ENCODE measurements at regions of chr12 and their contacts with region 1.

Region 1: GRCh38 chr12:105705765-105706164 is 375.3 kb downstream of the C12orf75 start:
- DNase-seq: no peak
- H3K4me3 ChIP-seq: no peak overlapping the region
- H3K27ac ChIP-seq: no peak overlapping the region
- H3K4me1 ChIP-seq: peaks cover 0 to 6% (median 0%) of the 10 kb centered on the region in 3 donors
- H3K27me3 ChIP-seq: no peaks in the 10 kb centered on the region
- CTCF ChIP-seq: peak in 5 of 6 experiments; percentile 48 to 75 (median 58)
- POLR2A ChIP-seq: no peak

Region 2: DNA sequence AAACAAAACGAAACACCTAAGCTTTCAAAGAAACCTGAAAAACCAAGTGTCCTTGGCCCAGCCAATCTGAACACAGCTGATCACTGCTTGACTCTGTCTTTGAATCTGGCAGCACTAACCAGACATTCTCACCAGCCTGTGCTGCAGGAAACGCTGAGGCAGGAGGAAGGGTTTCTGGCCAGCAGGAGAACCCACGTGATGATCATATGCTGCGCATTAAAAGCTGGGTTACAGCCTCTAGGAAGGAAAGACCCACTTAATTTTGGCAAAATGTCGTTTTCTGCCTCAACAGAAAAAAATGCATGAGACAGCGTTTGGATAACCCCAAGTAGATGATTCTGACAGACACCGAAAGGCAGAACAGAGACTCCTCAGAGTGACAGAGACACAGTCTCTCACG is 479.5 kb before region 1 on chr12:
- intact Hi-C with region 1: no loop called
- DNase-seq: no peak
- H3K4me3 ChIP-seq: no peak overlapping the region
- H3K27ac ChIP-seq: peak overlapping the region in 3 of 4 donors; percentile 47 to 63 (median 53)
- H3K4me1 ChIP-seq: peaks cover 4 to 97% (median 17%) of the 10 kb centered on the region in 3 donors
- H3K27me3 ChIP-seq: no peaks in the 10 kb centered on the region
- CTCF ChIP-seq: no peak
- POLR2A ChIP-seq: peak in 1 of 4 donors; percentile 13

Region 3: DNA sequence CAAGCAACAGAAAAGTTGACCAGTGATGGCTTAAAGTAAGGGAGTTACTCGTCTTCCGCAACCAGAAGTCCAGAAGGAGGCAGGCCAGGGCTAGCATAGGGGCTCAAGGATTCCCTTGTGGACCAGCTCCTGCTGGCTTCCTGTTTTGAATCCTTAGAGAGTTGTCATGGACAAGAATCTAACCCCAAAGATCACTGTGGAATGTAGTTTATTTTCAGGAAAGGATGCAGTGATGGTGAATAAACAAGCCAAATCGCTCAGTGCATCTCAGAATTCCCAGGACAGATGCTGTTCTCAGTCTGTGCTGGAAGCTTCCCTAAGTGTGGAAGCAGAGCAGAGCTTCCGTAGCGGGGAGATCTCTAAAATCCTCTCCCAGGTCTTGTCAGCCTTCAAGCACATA is 64.0 kb before region 1 on chr12:
- intact Hi-C with region 1: no loop called
- DNase-seq: no peak
- H3K4me3 ChIP-seq: no peak overlapping the region
- H3K27ac ChIP-seq: no peak overlapping the region
- H3K4me1 ChIP-seq: no peaks in the 10 kb centered on the region
- H3K27me3 ChIP-seq: no peaks in the 10 kb centered on the region
- CTCF ChIP-seq: no peak
- POLR2A ChIP-seq: no peak

Region 4: DNA sequence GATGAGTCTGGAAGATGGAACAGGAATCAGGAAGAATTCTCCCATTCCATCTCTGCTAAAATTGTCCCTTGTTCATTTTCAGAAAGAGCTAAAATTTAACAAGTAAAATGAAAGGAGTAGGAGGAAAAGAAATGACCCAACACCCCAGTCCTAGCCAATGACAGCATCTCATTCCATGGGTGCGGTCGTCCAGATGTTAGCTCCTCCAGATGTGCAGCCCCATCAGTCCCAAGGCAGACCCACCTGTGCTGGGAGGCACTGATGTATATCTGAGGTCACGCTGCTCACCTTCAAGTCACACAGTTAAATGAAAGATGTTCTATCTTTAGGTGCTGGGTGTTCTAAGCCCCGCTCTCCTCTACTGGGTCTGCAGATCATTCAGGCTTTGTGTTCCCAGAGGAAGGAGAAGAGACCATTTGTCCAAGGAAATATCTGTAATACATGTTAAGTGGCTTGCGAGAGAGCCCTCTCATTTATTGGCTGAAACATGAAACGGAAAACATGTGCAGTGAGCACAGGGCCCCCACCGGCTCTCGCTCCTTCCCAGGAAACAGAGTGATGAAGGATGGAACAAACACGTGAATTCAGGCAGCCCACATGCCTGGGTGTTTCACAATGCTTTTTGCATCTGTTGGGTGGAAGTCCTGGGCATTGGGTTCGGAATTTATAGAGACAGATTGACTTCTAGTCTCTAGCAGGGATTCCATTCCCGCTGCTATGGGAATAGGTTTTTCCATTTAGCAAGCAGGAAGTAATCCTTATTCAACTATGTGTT is 138.4 kb after region 1 on chr12:
- intact Hi-C with region 1: no loop called
- DNase-seq: no peak
- H3K4me3 ChIP-seq: no peak overlapping the region
- H3K27ac ChIP-seq: peak overlapping the region in 1 of 4 donors; percentile 16
- H3K4me1 ChIP-seq: peaks cover 0 to 5% (median 0%) of the 10 kb centered on the region in 3 donors
- H3K27me3 ChIP-seq: no peaks in the 10 kb centered on the region
- CTCF ChIP-seq: no peak
- POLR2A ChIP-seq: no peak

Region 5: DNA sequence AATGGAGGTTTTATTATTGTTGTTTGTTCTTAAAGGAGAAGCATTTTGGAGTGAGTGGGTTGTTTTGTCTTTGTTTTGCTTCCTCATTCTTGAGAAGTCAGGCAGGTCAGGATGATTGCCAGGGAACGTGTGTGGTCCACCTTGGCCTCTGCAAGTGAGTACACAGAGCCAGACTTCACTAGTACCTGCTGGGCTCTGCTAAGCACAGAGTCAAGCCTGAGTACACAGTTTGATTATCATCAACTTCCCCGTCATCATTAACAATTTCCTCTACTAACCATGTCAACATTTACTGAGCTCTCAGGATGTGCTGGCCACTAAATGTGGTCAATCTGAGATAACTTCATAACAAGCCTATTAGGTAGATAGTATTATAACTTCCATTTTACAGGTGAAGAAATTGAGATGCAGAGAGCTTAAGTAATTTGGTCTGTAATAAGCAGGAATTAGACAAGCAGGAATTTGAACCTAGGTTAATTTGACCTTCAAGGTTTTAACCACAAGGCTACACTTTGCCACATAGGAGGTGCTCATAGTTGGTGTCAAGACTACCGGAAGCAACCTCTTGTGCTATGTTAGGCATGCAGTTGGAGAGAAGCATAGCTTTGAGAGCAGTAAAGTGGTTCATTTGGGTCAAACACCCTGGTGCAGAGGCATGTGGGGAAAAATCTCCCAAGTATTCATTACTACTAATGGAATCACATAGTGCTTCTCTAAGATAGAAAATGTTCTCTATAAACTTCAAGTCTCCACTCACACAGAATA is 254.7 kb after region 1 on chr12:
- intact Hi-C with region 1: no loop called
- DNase-seq: no peak
- H3K4me3 ChIP-seq: no peak overlapping the region
- H3K27ac ChIP-seq: no peak overlapping the region
- H3K4me1 ChIP-seq: peaks cover 0 to 11% (median 0%) of the 10 kb centered on the region in 3 donors
- H3K27me3 ChIP-seq: no peaks in the 10 kb centered on the region
- CTCF ChIP-seq: no peak
- POLR2A ChIP-seq: no peak

Region 6: GRCh38 chr12:106136263-106136662 is 430.5 kb after region 1 on chr12:
- intact Hi-C with region 1: loop called (anchors 10 kb)
- DNase-seq: no peak
- H3K4me3 ChIP-seq: peak overlapping the region; percentile 7 to 82 (median 70)
- H3K27ac ChIP-seq: peak overlapping the region; percentile 5 to 96 (median 91)
- H3K4me1 ChIP-seq: peaks cover 0 to 91% (median 43%) of the 10 kb centered on the region in 3 donors
- H3K27me3 ChIP-seq: peaks cover 0 to 57% (median 3%) of the 10 kb centered on the region in 4 donors
- CTCF ChIP-seq: peak; percentile 80 to 87 (median 85)
- POLR2A ChIP-seq: peak in 1 of 4 donors; percentile 25